Transverse colon (tissue), 4 donors: ENCODE measurements at regions of chr4 and their contacts with region 1.

Region 1: DNA sequence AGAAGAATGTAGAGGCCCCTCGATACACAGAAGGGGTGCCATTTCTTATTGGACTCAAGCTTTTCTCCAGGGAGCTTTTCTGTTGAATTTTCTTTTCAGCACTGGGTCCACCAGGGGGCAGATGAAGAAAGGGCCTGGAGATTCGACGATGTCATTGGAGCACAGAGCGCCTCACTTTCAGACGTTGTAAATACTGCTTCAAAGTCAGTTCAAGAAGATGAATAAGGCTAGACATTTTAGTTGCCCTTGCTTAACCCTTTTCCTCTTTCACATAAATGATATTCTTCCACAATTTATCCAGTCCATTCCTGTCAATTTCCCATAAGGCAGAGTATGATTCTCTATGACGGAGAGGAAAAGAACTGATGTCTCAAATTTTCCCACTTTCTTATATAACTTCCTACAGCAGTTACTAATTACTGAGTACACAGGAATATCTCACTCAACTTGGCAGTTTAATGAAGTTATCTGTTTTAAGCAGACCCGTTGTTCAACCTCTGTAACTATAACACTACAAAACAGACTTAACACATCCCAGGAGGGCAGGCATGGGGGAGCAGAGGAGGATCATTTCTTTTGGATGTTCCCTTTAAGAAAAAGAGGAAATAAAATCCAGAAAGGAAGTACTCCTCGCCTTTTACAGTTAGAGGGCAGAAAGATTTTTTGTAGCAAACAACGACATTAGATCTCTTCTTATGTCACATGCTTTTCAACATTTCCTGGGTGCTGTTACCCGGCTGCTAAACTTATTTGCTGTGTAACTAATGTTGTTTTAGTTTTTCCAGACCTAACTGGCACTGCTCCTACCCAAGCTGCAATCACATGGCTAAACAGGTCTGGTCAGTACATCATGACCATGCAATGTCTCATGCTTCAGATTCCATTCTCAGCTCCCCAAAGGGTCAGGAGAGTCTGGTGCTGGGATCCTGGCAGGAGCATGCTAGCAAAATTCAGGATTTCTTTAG is 12.2 kb upstream of the CENPU start:
- DNase-seq: peak; percentile 78
- H3K4me3 ChIP-seq: no peak overlapping the region
- H3K27ac ChIP-seq: peak overlapping the region; percentile 64 to 81 (median 76)
- H3K4me1 ChIP-seq: peaks cover 15 to 35% (median 22%) of the 10 kb centered on the region in 4 donors
- H3K27me3 ChIP-seq: no peaks in the 10 kb centered on the region
- CTCF ChIP-seq: peak; percentile 73 to 82 (median 78)
- EP300 ChIP-seq: no peak
- POLR2A ChIP-seq: no peak

Region 2: GRCh38 chr4:184983672-184984356 is 237.7 kb after region 1 on chr4:
- in situ Hi-C with region 1: loop called in 1 of 4 experiments (anchors 25 kb)
- intact Hi-C with region 1: loop called (anchors 5 kb)
- DNase-seq: peak; percentile 71
- H3K4me3 ChIP-seq: no peak overlapping the region
- H3K27ac ChIP-seq: no peak overlapping the region
- H3K4me1 ChIP-seq: peaks cover 0 to 6% (median 3%) of the 10 kb centered on the region in 4 donors
- H3K27me3 ChIP-seq: peaks cover 8% of the 10 kb centered on the region
- CTCF ChIP-seq: peak; percentile 33 to 51 (median 34)
- EP300 ChIP-seq: no peak
- POLR2A ChIP-seq: no peak

Region 3: DNA sequence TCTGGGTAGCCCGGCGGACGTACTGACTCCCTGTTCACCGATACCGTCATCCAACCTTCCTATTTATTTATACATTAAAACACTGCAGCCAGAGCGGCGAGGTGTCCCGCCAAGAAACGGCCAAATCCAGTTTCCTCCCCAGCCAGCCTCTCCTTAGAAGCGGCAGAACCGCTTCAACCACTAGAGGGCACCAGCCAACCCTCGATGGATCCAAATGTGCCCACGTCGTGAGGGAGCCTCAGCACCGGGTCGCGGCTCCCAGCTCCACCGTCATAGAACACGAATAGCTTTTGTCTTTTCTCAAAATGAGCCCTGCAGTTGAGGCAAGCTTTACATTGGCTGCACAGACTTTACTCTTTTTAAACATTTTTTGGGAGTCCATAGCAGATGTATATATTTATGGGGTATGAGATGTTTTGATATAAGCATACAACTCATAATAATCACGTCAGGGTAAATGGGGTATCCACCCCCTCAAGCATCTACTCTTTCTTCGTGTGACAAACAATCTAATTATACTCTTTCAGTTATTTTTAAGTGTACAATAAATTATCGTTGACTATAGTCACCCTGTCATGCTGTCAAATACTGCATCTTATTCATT is 259.2 kb after region 1 on chr4:
- in situ Hi-C with region 1: loop called in 1 of 4 experiments (anchors 10 kb)
- intact Hi-C with region 1: no loop called
- DNase-seq: peak; percentile 85
- H3K4me3 ChIP-seq: peak overlapping the region in 1 of 4 donors; percentile 15
- H3K27ac ChIP-seq: no peak overlapping the region
- H3K4me1 ChIP-seq: peaks cover 0 to 10% (median 6%) of the 10 kb centered on the region in 4 donors
- H3K27me3 ChIP-seq: peaks cover 25% of the 10 kb centered on the region
- CTCF ChIP-seq: peak; percentile 76 to 96 (median 87)
- EP300 ChIP-seq: no peak
- POLR2A ChIP-seq: no peak

Region 4: DNA sequence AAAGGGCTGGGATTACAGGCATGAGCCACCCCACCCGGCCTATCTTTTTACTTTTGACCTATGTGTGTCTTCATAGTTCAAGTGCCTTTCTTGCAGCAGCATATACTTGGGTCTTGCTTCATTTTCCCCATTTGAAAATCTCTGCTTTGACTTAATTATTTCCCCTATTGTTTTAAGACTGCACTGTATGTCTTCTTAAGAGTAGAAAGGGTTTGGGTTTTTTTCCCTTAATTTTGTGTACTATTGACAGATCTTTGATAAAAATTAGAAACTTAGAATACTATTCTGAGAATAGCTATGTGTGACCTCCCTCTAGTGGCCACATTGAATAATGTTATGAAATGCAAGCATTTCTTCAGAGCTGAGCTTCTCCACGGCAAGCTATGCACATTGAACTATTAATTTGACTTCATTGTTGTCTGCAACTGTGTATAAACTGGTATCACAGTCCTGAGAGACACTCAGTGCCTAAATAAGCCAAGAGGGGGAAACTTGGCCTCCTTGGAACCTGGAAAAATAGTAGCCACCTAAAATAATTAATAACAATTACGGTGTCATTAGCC is 388.3 kb after region 1 on chr4:
- in situ Hi-C with region 1: no loop called
- intact Hi-C with region 1: loop called (anchors 10 kb)
- DNase-seq: no peak
- H3K4me3 ChIP-seq: no peak overlapping the region
- H3K27ac ChIP-seq: no peak overlapping the region
- H3K4me1 ChIP-seq: no peaks in the 10 kb centered on the region
- H3K27me3 ChIP-seq: peaks cover 14% of the 10 kb centered on the region
- CTCF ChIP-seq: peak; percentile 70 to 84 (median 79)
- EP300 ChIP-seq: no peak
- POLR2A ChIP-seq: no peak